GM12878 (cell line): ENCODE measurements at regions of chr14 and their contacts with region 1.

Region 1: DNA sequence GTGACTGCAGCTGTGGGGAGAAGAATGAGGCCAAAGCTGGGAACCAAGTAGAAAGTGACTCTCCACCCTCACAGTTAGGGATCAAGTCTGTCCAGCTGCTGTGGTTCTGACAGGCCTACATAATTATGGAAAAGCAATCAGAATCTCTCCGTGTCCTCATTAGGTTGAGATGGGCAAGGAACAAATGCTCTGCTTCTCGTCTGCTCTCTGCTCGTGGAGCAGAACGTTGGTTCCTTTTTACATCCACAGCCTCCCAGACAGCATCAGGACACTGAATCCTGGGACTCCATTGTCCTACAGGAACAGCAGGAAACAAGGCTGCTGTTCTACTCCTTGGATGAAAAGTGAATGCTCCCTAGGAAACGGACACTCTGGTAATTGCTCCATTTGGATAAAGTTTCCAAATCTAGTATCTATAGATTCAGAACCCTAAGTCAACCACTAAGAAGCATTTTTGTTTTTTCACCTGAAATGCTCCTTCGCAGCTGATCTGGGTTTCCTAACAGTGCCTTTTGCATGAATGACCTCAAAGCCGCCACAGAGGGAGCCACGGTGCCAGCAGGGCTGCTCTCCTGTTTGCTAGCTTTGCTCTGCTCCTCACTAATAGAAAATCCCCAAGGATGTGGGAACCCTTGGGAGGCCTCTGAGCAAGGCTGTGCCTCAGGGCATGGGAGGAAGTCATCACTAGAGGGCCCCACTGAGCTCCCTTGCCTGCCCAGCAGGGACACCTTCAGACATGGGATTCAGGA is 102.0 kb downstream of the EGLN3 start:
- DNase-seq: no peak
- ATAC-seq: peak; percentile 86
- H3K4me3 ChIP-seq: no peak overlapping the region
- H3K27ac ChIP-seq: no peak overlapping the region
- H3K4me1 ChIP-seq: no peaks in the 10 kb centered on the region
- H3K27me3 ChIP-seq: no peaks in the 10 kb centered on the region; a peak in 1 of 4 replicates
- CTCF ChIP-seq: peak; percentile 57 to 74 (median 68)
- EP300 ChIP-seq: no peak
- POLR2A ChIP-seq: no peak
- RAD21 ChIP-seq: peak; percentile 71

Region 2: GRCh38 chr14:33592297-33592696 is 256.6 kb before region 1 on chr14:
- CTCF ChIA-PET with region 1: no interaction called
- POLR2A ChIA-PET with region 1: no interaction called
- RAD21 ChIA-PET with region 1: no interaction called
- SMC1A ChIA-PET with region 1: no interaction called
- in situ Hi-C with region 1: no loop called
- intact Hi-C with region 1: no loop called
- DNase-seq: no peak
- ATAC-seq: no peak
- H3K4me3 ChIP-seq: no peak overlapping the region
- H3K27ac ChIP-seq: no peak overlapping the region
- H3K4me1 ChIP-seq: no peaks in the 10 kb centered on the region
- H3K27me3 ChIP-seq: no peaks in the 10 kb centered on the region; a peak in 1 of 4 replicates
- CTCF ChIP-seq: no peak
- EP300 ChIP-seq: no peak
- POLR2A ChIP-seq: no peak
- RAD21 ChIP-seq: no peak

Region 3: GRCh38 chr14:33859306-33859705 is 10.4 kb after region 1 on chr14:
- CTCF ChIA-PET with region 1: interaction called, 18 read pairs
- POLR2A ChIA-PET with region 1: interaction called, 3 read pairs
- RAD21 ChIA-PET with region 1: interaction called, 4 read pairs
- SMC1A ChIA-PET with region 1: interaction called, 31 read pairs
- in situ Hi-C with region 1: no loop called
- intact Hi-C with region 1: no loop called
- DNase-seq: no peak
- ATAC-seq: peak; percentile 28; the same call in 1 of the 3 replicates
- H3K4me3 ChIP-seq: no peak overlapping the region
- H3K27ac ChIP-seq: no peak overlapping the region
- H3K4me1 ChIP-seq: peaks cover 3% of the 10 kb centered on the region; the same call in 1 of the 2 replicates
- H3K27me3 ChIP-seq: no peaks in the 10 kb centered on the region
- CTCF ChIP-seq: no peak
- EP300 ChIP-seq: no peak
- POLR2A ChIP-seq: no peak
- RAD21 ChIP-seq: no peak

Region 4: DNA sequence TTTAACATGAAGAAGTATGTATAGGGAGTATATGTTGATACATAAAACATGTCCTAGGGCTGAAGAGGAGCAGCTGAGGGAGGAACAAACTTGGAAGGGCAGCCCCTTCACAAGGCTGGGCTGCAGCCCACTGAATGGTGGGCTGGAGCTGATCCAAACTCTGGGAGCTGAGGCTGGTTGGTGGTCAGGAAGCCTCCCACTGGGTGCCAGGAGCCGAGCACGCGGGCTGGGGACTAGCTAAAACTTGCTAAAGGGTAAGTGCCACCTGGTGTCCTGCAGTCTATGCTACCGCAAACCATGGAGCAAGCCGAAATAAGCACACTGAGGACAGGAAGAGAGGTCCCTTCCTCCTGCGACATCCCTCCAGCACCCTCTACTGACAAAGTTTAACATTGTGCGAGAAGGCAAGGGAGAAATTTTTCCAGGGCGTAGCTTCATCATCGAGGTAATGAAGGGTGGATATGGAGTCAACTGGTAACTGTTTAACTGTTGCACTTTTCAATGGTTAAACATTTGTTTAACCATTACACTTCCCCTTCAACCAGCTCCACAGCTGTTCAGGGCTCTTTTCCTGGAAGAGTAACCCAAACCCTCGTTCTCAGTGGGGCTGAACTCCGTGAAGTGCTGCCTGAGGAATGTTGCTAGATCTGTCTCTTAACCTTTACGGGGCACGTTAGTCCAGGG is 59.8 kb after region 1 on chr14:
- CTCF ChIA-PET with region 1: interaction called, 20 read pairs
- POLR2A ChIA-PET with region 1: no interaction called
- RAD21 ChIA-PET with region 1: interaction called, 3 read pairs
- SMC1A ChIA-PET with region 1: interaction called, 24 read pairs
- in situ Hi-C with region 1: no loop called
- intact Hi-C with region 1: no loop called
- DNase-seq: no peak
- ATAC-seq: no peak
- H3K4me3 ChIP-seq: no peak overlapping the region
- H3K27ac ChIP-seq: no peak overlapping the region
- H3K4me1 ChIP-seq: no peaks in the 10 kb centered on the region
- H3K27me3 ChIP-seq: no peaks in the 10 kb centered on the region
- CTCF ChIP-seq: no peak
- EP300 ChIP-seq: no peak
- POLR2A ChIP-seq: no peak
- RAD21 ChIP-seq: no peak

Region 5: GRCh38 chr14:33938131-33938949 is 89.5 kb after region 1 on chr14:
- CTCF ChIA-PET with region 1: interaction called, 13 read pairs
- POLR2A ChIA-PET with region 1: interaction called, 3 read pairs
- RAD21 ChIA-PET with region 1: interaction called, 17 read pairs
- SMC1A ChIA-PET with region 1: interaction called, 15 read pairs
- in situ Hi-C with region 1: no loop called
- intact Hi-C with region 1: no loop called
- DNase-seq: peak; percentile 36
- ATAC-seq: no peak
- H3K4me3 ChIP-seq: no peak overlapping the region; the same call in 1 of the 2 replicates
- H3K27ac ChIP-seq: no peak overlapping the region
- H3K4me1 ChIP-seq: no peaks in the 10 kb centered on the region
- H3K27me3 ChIP-seq: no peaks in the 10 kb centered on the region
- CTCF ChIP-seq: no peak
- EP300 ChIP-seq: no peak
- POLR2A ChIP-seq: no peak
- RAD21 ChIP-seq: no peak

Region 6: DNA sequence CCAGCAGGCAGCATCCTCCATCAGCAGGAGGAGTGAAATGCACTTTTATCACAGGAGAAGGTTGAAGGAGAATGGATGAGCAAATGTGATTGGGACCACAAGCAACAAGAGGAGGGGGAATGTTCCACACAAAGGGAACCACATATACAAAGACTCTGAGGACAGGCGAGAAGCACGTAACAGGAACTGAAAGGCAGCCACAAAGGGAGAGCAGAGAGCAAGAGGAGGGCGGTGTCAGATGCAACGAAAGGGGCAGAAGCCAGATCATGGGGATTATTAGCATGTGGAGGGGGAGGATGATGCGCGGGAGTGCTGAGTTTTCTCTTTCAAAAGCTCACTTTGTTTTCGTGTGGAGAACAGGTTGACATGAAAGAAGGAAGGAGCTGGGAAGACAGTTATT is 372.0 kb after region 1 on chr14:
- CTCF ChIA-PET with region 1: interaction called, 196 read pairs
- POLR2A ChIA-PET with region 1: no interaction called
- RAD21 ChIA-PET with region 1: interaction called, 11 read pairs
- SMC1A ChIA-PET with region 1: interaction called, 45 read pairs
- in situ Hi-C with region 1: no loop called
- intact Hi-C with region 1: no loop called
- DNase-seq: peak; percentile 40
- ATAC-seq: peak; percentile 99
- H3K4me3 ChIP-seq: no peak overlapping the region
- H3K27ac ChIP-seq: no peak overlapping the region
- H3K4me1 ChIP-seq: no peaks in the 10 kb centered on the region
- H3K27me3 ChIP-seq: peaks cover 0 to 2% of the 10 kb centered on the region in 2 experiments; a peak in 1 of 4 replicates
- CTCF ChIP-seq: no peak
- EP300 ChIP-seq: peak in 1 of 2 experiments; percentile 83; a peak in 2 of 4 replicates
- POLR2A ChIP-seq: no peak
- RAD21 ChIP-seq: no peak

Region 7: GRCh38 chr14:34300882-34301734 is 452.2 kb after region 1 on chr14:
- CTCF ChIA-PET with region 1: interaction called, 76 read pairs
- POLR2A ChIA-PET with region 1: no interaction called
- RAD21 ChIA-PET with region 1: interaction called, 9 read pairs
- SMC1A ChIA-PET with region 1: interaction called, 6 read pairs
- in situ Hi-C with region 1: no loop called
- intact Hi-C with region 1: no loop called
- DNase-seq: peak; percentile 7
- ATAC-seq: peak; percentile 67
- H3K4me3 ChIP-seq: no peak overlapping the region
- H3K27ac ChIP-seq: no peak overlapping the region
- H3K4me1 ChIP-seq: no peaks in the 10 kb centered on the region
- H3K27me3 ChIP-seq: no peaks in the 10 kb centered on the region
- CTCF ChIP-seq: peak; percentile 51 to 59 (median 56); a peak in 5 of 6 replicates
- EP300 ChIP-seq: no peak
- POLR2A ChIP-seq: no peak
- RAD21 ChIP-seq: peak; percentile 62